Common myeloid progenitor, CD34-positive (primary cell): ENCODE measurements at regions of chr17 and their contacts with region 1.

Region 1: DNA sequence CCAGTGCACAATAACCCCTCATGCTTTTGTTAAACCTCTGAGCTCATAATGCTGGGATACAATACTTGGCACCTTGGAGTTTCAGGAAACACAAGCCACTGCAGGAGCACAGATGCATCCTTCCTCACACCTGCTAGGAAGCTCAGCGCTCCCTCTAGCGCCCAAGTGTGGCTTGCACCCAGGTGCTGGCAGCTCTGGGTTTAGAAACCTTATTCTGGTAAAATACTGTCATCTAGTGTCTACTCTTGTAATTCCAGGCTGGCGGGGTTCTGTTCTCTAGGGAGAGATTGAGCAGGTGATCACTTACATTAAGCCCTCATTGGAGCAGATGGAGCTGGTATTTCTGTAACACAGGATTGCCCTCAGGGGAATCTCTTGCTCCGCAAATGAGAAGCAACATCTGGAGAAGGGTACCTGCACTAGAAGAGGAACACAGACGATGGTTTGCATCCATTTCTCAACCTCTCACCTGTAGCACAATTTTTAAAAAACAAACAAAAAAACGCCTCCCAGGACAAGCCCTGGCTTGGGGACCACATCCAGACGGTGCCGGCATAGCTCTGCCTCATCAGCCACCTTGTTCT is 1.5 kb downstream of the CCL1 start:
- DNase-seq: peak; percentile 90 to 95 (median 93)
- H3K4me3 ChIP-seq: no peak overlapping the region
- H3K27ac ChIP-seq: no peak overlapping the region
- H3K4me1 ChIP-seq: peaks cover 17 to 53% (median 41%) of the 10 kb centered on the region in 4 experiments
- H3K27me3 ChIP-seq: no peaks in the 10 kb centered on the region

Region 2: GRCh38 chr17:34156741-34157589 is 204.6 kb before region 1 on chr17:
- CTCF ChIA-PET with region 1: interaction called, 16 read pairs
- POLR2A ChIA-PET with region 1: no interaction called
- DNase-seq: peak in 2 of 3 donors; percentile 55 to 65
- H3K4me3 ChIP-seq: peak overlapping the region in 5 of 7 experiments; percentile 1 to 67 (median 56)
- H3K27ac ChIP-seq: no peak overlapping the region
- H3K4me1 ChIP-seq: peaks cover 0 to 46% (median 27%) of the 10 kb centered on the region in 4 experiments
- H3K27me3 ChIP-seq: peaks cover 5 to 39% (median 11%) of the 10 kb centered on the region in 5 experiments

Region 3: DNA sequence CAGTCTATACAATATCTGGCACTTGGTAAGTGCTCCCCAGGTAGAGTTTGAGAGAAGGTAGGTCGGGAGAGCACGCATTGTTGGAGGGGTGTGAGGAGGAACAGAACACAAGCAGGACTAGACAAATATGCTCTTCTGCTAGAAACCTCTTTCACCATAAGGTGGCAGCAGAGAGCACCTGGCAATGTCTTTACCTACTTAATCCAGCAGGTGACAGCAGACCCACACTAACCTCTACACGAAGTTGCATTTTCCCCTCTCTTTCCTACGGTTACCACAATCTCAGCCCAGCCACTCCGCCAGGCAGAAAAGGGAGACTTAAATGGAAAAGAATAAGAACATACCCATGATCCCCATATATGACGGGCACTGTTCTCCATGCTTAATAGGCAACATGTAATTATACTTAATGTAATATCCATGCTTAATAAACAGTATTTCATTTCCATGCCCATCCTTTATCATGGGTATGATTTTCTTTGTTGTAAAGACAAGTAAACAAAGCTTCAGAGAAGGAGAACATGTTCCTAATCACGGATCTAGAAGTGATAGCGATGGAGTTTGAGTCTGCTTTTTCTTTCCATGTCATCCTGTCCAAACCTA is 161.5 kb before region 1 on chr17:
- CTCF ChIA-PET with region 1: interaction called, 318 read pairs
- POLR2A ChIA-PET with region 1: interaction called, 9 read pairs
- DNase-seq: peak; percentile 82 to 91 (median 84)
- H3K4me3 ChIP-seq: no peak overlapping the region
- H3K27ac ChIP-seq: no peak overlapping the region
- H3K4me1 ChIP-seq: peaks cover 0 to 2% (median 0%) of the 10 kb centered on the region in 4 experiments
- H3K27me3 ChIP-seq: peaks cover 0 to 13% (median 0%) of the 10 kb centered on the region in 5 experiments

Region 4: GRCh38 chr17:34248511-34249024 is 113.0 kb before region 1 on chr17:
- CTCF ChIA-PET with region 1: interaction called, 11 read pairs
- POLR2A ChIA-PET with region 1: no interaction called
- DNase-seq: peak in 1 of 3 donors; percentile 19
- H3K4me3 ChIP-seq: no peak overlapping the region
- H3K27ac ChIP-seq: no peak overlapping the region
- H3K4me1 ChIP-seq: peaks cover 22 to 82% (median 47%) of the 10 kb centered on the region in 4 experiments
- H3K27me3 ChIP-seq: peaks cover 0 to 3% (median 0%) of the 10 kb centered on the region in 5 experiments

Region 5: DNA sequence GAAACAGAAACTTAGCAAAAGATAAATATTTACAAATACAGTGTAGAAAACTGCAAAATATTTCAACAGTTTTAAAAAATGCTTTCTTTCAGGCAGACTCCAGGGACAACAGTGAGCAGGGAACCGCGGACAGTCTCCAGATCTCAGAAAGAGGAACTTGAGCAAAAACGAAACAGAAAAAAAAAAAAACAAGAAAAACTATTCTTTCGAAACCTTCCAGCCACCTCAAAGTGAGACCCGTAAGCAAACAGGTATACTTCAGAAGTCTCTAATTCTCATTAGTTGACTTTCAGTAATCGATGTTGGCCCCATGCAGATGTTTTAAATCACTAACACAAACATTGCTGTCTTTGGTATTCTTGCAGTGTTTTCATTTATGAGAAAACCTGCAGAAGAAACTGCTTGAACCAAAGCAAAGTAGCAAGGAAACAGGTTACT is 17.1 kb after region 1 on chr17:
- CTCF ChIA-PET with region 1: interaction called, 34 read pairs
- POLR2A ChIA-PET with region 1: no interaction called
- DNase-seq: peak; percentile 77 to 90 (median 89)
- H3K4me3 ChIP-seq: peak overlapping the region in 4 of 7 experiments; percentile 40 to 45 (median 44)
- H3K27ac ChIP-seq: peak overlapping the region in 1 of 2 experiments; percentile 45
- H3K4me1 ChIP-seq: peaks cover 11 to 46% (median 33%) of the 10 kb centered on the region in 4 experiments
- H3K27me3 ChIP-seq: no peaks in the 10 kb centered on the region